PC-3 (cell line): ENCODE measurements at regions of chr2 and their contacts with region 1.

Region 1: DNA sequence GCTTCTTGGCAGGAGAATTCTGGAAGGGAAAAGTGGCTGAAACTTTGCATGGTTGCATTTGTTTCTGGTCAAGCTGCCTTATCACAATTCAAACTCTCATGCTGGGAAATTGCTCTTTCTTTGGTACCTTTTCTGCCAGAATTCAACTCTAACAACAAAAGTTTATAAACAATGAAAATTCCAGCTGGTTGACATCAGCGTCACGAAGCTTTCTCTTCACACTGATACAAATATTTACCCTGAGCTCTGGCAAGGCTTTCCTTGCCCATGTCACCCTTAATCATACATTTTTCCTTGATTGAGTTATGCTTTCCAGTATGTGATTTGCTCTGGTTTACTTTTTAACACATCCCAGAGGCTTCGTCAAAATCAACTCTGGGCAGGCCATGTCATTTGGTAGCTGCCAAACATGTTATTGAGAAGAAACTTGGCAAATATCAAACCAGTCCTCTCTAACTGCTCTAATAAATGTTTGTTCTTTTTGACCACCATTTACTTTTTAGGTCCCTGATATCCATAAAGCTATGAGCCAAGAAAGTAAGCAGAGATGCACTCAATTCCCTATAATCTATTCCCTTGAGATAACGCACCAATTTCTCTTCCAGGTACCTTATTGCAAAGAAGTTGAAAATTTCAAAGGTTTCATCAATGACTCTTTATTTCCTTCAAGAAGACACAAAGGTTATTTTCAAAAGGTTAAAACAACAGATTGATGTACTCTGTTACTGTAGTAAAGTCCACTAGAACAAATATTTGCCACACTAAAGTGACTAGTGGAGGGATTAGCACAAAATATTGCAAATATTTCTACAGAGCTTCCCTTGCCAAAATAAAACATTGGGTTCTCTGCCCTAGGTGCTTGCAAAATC is 1241.1 kb upstream of the ZEB2 start:
- DNase-seq: peak; percentile 95
- ATAC-seq: peak; percentile 97
- H3K4me3 ChIP-seq: no peak overlapping the region
- H3K27ac ChIP-seq: peak overlapping the region; percentile 73
- H3K4me1 ChIP-seq: peaks cover 27% of the 10 kb centered on the region
- H3K27me3 ChIP-seq: no peaks in the 10 kb centered on the region
- CTCF ChIP-seq: no peak

Region 2: DNA sequence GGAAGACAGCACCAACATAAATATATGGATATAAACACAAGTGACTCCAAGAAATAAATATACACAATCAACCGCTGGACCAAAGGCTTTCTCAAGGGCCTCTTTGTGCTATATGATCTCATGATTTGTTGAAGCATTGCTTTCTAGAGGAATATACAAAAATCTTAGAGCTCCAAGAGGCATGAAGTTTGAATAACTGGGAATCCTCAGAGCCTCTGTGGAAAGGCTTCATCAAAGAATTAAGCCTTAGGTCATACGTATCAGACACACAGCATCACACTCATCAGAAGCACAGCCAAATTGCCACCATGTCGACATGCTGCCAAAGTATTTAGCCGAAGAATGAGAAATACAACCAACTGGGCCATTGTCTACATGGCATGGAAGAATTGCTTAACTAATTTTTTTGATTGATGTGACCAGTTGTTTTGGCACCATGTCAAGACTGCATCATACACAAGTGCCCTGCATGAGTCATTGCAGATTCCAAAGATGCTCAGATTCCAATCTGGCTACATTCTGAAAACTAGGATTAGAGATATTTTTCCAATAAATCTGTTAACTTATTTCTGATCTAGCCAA is 380.5 kb before region 1 on chr2:
- CTCF ChIA-PET with region 1: no interaction called
- POLR2A ChIA-PET with region 1: no interaction called
- intact Hi-C with region 1: no loop called
- DNase-seq: peak; percentile 84
- ATAC-seq: no peak
- H3K4me3 ChIP-seq: no peak overlapping the region
- H3K27ac ChIP-seq: no peak overlapping the region
- H3K4me1 ChIP-seq: no peaks in the 10 kb centered on the region
- H3K27me3 ChIP-seq: no peaks in the 10 kb centered on the region
- CTCF ChIP-seq: no peak

Region 3: GRCh38 chr2:145623136-145623535 is 137.9 kb before region 1 on chr2:
- CTCF ChIA-PET with region 1: no interaction called
- POLR2A ChIA-PET with region 1: no interaction called
- intact Hi-C with region 1: loop called (anchors 5 kb)
- DNase-seq: peak; percentile 97
- ATAC-seq: peak; percentile 99
- H3K4me3 ChIP-seq: peak overlapping the region; percentile 51
- H3K27ac ChIP-seq: peak overlapping the region; percentile 87
- H3K4me1 ChIP-seq: peaks cover 34% of the 10 kb centered on the region
- H3K27me3 ChIP-seq: no peaks in the 10 kb centered on the region
- CTCF ChIP-seq: no peak

Region 4: DNA sequence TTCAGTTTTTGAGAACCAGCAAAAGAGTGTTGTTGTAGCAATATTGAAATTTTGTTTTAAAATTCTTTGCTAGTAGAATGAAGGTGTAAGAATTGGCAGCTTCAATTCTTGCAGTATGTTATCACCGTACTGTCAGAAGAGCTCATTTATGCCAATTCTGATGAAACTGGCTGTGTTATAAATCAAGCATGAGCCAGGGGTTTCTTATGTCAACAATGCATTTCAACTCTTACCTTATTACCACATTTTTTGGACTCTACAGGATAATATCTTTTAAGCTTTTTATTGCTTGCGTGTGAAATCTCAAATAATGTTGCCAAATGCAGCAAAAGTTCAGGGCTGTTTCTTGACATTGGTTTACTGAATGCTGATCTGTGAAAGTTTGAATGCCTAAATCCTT is 148.2 kb after region 1 on chr2:
- CTCF ChIA-PET with region 1: no interaction called
- POLR2A ChIA-PET with region 1: no interaction called
- intact Hi-C with region 1: loop called (anchors 1 kb)
- DNase-seq: peak; percentile 74
- ATAC-seq: peak; percentile 68
- H3K4me3 ChIP-seq: peak overlapping the region; percentile 29; the same call in 1 of the 2 replicates
- H3K27ac ChIP-seq: peak overlapping the region; percentile 71
- H3K4me1 ChIP-seq: peaks cover 54% of the 10 kb centered on the region
- H3K27me3 ChIP-seq: no peaks in the 10 kb centered on the region
- CTCF ChIP-seq: no peak